CD8-positive, alpha-beta T cell (primary cell): ENCODE measurements at regions of chr10 and their contacts with region 1.

Region 1: DNA sequence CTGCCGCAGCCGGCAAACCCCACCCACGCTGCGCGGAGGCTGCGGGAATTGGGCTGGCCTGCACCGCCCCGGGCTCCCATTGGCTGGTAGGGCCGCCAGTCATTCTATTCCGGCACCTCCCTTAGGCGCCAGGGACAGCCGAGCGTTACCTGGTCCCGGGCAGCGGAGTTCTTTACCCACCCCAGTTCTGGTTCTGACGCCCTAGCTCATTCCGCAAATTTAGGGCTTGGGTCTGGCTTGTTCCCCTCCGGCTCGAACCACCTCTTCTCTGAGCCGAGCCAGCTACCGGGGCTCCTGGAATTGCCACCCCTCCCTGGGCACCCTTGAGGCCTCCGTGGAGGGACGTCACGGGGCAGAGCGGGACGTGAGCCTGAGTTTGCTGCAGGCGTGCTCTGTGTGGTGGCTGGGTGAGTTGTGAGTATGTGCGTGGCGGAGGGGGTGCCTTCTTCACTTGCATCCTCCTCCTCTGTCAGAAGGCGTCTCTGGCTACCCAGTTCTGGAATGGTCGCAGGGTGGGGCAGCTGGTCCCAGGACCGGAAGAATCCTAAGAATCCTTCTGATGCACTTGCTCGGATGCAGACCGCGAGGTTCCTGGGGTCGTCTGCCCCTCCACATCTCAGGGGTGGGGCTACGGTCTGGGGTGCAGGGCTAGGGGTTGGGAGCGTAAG is at the starts of genes PDZD7 and SFXN3:
- DNase-seq: peak; percentile 91 to 98 (median 96)
- ATAC-seq: peak; percentile 76
- H3K4me3 ChIP-seq: peak within 1 kb of the TSS; percentile 86 to 91
- H3K4me3 Mint-ChIP-seq: peak within 1 kb of the TSS; percentile 91
- H3K27ac ChIP-seq: peak within 1 kb of the TSS; percentile 87 to 98
- H3K27ac Mint-ChIP-seq: peak within 1 kb of the TSS; percentile 91
- H3K4me1 ChIP-seq: peaks cover 14% of the 10 kb centered on the region
- H3K4me1 Mint-ChIP-seq: peaks cover 23% of the 10 kb centered on the region
- H3K27me3 ChIP-seq: no peaks in the 10 kb centered on the region
- H3K27me3 Mint-ChIP-seq: no peaks in the 10 kb centered on the region
- CTCF ChIP-seq: no peak
- total RNA-seq, gene PDZD7: 0.95 to 1.7 TPM
- total RNA-seq, gene SFXN3: 38.1 to 39.3 TPM

Region 2: DNA sequence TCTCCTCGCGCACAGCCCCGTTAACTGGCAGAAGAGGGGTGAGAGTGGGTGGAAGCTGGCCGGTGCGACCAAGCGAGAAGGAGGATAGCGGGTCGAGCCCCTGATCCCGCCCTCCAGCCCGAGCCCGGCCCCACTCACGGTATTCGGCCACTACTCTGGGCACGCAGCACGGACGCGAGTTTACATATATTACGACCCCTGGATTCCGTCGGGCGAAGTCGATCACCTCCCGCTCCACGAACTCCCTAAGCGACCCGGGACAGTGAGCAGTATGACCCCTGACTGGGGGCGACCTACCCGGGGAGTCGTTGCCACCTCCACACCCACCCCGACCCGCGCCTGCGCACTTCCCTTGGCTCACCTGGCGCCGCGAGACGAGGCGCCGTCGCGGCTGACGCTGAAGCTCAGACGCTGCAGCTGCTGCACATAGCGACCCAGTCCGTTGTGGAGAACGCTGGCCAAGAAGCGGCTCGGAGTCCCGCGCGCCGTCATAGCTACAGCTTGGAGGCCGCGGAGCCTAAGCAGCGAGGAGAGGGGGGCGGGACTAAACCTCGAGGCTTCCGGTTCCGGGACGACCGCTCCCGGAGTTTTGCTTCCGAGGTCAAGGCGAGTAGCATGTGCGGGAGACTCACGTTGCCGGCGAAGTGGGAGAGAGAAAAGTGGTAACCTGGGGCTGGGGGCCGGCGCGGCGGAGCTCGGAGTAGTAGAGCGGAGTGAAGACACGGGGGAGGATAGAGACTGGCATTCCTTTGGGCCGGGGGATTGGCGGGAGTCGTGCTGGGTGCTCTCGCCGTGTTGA is 44.1 kb before region 1 on chr10 and contains the starts of genes MRPL43 and TWNK:
- CTCF ChIA-PET with region 1: no interaction called
- POLR2A ChIA-PET with region 1: interaction called, 3 read pairs
- intact Hi-C with region 1: loop called (anchors 1 to 2 kb)
- DNase-seq: peak; percentile 68 to 90 (median 87)
- ATAC-seq: peak; percentile 95
- H3K4me3 ChIP-seq: peak within 1 kb of the TSS; percentile 79 to 93
- H3K4me3 Mint-ChIP-seq: peak within 1 kb of the TSS; percentile 99
- H3K27ac ChIP-seq: peak within 1 kb of the TSS; percentile 51 to 64
- H3K27ac Mint-ChIP-seq: peak within 1 kb of the TSS; percentile 95
- H3K4me1 ChIP-seq: peaks cover 35% of the 10 kb centered on the region
- H3K4me1 Mint-ChIP-seq: peaks cover 46% of the 10 kb centered on the region
- H3K27me3 ChIP-seq: no peaks in the 10 kb centered on the region
- H3K27me3 Mint-ChIP-seq: no peaks in the 10 kb centered on the region
- CTCF ChIP-seq: no peak
- total RNA-seq, gene MRPL43: 28.3 to 28.4 TPM
- total RNA-seq, gene TWNK: 4.6 to 4.7 TPM

Region 3: DNA sequence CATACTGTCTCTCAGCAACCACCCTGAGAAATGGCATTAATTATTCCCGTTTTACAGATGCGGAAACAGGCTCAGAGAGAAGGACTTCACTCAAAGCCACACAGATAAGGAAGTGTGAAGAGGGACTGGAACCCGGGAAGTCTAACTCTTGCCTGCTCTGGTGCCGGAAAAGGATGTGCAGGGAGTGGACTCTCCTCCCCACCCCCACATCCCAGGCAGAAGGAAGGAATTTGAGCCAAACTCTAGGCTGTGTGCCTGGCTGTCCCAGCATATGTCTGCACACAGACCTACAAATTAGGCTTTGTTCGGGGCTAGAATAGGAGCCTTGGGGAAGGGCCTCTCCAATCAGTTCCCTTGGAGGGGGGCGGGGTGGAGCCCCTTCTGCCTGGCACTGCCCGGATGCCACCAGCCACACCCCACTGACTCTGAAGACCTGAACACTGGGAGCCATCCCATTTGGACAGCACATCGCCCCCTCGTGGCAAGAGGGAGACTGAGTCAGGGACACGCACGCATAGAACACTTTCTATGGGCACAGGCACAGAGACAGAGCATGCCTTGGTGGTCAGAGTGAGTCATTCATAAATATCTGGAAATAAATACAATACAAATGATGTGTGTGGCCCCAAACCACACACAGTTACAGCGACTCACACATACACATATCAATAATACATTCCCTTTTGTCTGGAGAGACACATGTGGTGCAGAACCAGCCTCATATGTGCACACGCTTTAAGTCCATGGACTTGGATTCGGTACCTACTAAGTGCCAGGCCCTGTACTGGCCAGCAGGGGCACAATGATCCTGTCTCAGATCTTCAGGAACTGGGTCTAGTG is 18.5 kb before region 1 on chr10:
- CTCF ChIA-PET with region 1: interaction called, 21 read pairs
- POLR2A ChIA-PET with region 1: interaction called, 3 read pairs
- intact Hi-C with region 1: loop called (anchors 1 to 2 kb)
- DNase-seq: peak; percentile 41 to 85 (median 78)
- ATAC-seq: peak; percentile 86
- H3K4me3 ChIP-seq: no peak overlapping the region
- H3K4me3 Mint-ChIP-seq: no peak overlapping the region
- H3K27ac ChIP-seq: no peak overlapping the region
- H3K27ac Mint-ChIP-seq: no peak overlapping the region
- H3K4me1 ChIP-seq: peaks cover 6% of the 10 kb centered on the region
- H3K4me1 Mint-ChIP-seq: peaks cover 13% of the 10 kb centered on the region
- H3K27me3 ChIP-seq: peaks cover 13 to 16% of the 10 kb centered on the region in 2 experiments
- H3K27me3 Mint-ChIP-seq: peaks cover 33% of the 10 kb centered on the region
- CTCF ChIP-seq: peak; percentile 83

Region 4: DNA sequence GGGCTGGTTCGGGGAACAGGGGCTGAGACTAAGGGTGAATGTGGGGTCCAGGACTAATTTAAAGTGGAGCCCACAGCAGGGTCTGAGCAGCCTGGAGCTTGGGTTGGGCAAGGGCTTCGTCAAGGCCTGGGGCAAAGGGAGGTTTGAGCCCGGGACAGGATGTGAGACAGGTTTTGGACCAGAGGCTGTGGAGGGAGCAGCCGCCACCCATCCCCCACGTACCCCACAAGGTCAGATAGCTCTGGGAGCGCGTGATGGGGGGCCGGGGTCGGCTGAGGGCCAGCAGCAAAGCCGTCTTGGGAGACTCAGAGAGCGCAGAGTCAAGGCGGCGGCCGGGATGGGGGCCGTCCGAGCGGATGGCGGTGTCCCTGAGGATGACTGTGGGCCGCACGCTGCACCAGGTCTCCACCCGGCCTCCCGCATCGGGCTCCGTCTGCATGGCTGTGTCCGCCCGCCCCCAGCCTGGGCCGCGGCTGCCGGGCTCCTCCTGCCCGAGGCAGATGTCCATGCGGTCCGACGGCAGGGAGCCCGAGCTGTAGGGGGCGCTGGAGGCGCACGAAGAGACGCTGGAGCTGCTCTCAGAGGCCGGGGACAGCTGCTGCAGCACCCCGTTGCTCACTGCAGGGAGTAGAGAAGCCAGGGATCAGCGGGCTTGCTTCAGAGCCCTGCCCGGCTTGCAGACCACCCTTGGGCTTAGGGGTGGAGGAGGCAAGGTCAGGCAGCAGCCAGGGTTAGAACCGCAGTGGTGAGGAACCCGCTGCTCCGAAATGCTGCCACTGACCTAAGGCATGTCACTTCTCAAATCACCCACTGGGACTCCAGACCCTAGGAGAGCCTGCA is 12.4 kb before region 1 on chr10:
- CTCF ChIA-PET with region 1: interaction called, 21 read pairs
- POLR2A ChIA-PET with region 1: interaction called, 3 read pairs
- intact Hi-C with region 1: no loop called
- DNase-seq: peak; percentile 51 to 79 (median 73)
- ATAC-seq: peak; percentile 78
- H3K4me3 ChIP-seq: no peak overlapping the region
- H3K4me3 Mint-ChIP-seq: no peak overlapping the region
- H3K27ac ChIP-seq: no peak overlapping the region
- H3K27ac Mint-ChIP-seq: no peak overlapping the region
- H3K4me1 ChIP-seq: no peaks in the 10 kb centered on the region
- H3K4me1 Mint-ChIP-seq: peaks cover 4% of the 10 kb centered on the region
- H3K27me3 ChIP-seq: peaks cover 16 to 22% of the 10 kb centered on the region in 2 experiments
- H3K27me3 Mint-ChIP-seq: peaks cover 51% of the 10 kb centered on the region
- CTCF ChIP-seq: peak; percentile 58

Region 5: GRCh38 chr10:101042667-101043355 is 11.5 kb after region 1 on chr10:
- CTCF ChIA-PET with region 1: interaction called, 23 read pairs
- POLR2A ChIA-PET with region 1: interaction called, 34 read pairs
- intact Hi-C with region 1: loop called in 1 of 2 experiments (anchors 1 kb)
- DNase-seq: peak; percentile 50 to 90 (median 80)
- ATAC-seq: peak; percentile 72
- H3K4me3 ChIP-seq: peak overlapping the region; percentile 66 to 71
- H3K4me3 Mint-ChIP-seq: peak overlapping the region; percentile 97
- H3K27ac ChIP-seq: peak overlapping the region; percentile 50 to 76
- H3K27ac Mint-ChIP-seq: peak overlapping the region; percentile 93
- H3K4me1 ChIP-seq: peaks cover 13% of the 10 kb centered on the region
- H3K4me1 Mint-ChIP-seq: peaks cover 20% of the 10 kb centered on the region
- H3K27me3 ChIP-seq: peaks cover 0 to 6% of the 10 kb centered on the region in 2 experiments
- H3K27me3 Mint-ChIP-seq: peaks cover 12% of the 10 kb centered on the region
- CTCF ChIP-seq: no peak

Region 6: DNA sequence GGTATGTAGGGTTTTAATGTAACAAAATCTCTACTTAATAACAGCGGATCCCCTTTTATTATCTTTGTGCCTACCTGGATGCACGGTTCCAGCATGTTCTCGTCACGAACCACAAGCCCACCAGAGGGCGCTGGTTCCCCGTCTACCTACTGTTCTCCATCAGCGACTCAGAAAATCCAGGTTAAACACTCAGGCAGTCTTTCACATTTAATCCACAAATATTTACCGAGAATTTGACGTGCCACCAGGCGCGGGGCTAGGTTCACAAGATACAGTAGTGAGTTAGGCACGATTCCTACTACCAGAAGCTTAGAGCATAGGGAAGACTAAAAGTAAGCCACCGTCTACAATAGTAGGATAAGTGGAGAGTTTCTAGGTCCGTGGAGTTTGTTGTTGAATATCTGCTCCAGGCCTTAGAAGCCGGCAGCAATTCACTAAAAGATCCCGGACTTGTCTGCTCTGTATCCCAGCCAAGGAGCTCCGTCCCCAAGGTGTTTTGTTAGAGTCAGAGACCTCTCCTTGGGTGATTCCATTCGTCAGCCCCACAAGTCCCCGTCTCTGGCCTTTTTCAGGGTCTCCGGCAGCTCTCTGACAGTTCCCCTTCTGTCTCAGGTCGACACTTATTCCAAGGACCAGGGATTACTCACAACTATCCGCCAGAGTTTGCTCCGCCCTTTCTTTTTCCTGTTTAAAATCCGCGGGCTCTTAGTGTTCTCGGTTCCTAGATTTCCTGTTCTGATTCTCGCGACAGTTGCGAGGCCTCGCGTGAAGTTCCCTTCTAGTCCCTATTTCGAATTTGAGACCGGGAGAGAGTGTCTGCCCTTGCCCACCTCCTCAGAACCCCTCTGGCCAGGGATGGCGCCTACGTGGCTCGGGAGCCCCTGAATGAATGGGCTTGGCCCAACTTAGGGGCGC is 29.0 kb after region 1 on chr10:
- CTCF ChIA-PET with region 1: interaction called, 580 read pairs
- POLR2A ChIA-PET with region 1: interaction called, 7 read pairs
- intact Hi-C with region 1: loop called (anchors 1 to 5 kb)
- DNase-seq: peak; percentile 80 to 96 (median 91)
- ATAC-seq: peak; percentile 67
- H3K4me3 ChIP-seq: peak overlapping the region; percentile 85 to 94
- H3K4me3 Mint-ChIP-seq: peak overlapping the region; percentile 98
- H3K27ac ChIP-seq: peak overlapping the region; percentile 55 to 92
- H3K27ac Mint-ChIP-seq: peak overlapping the region; percentile 91
- H3K4me1 ChIP-seq: peaks cover 27% of the 10 kb centered on the region
- H3K4me1 Mint-ChIP-seq: peaks cover 27% of the 10 kb centered on the region
- H3K27me3 ChIP-seq: peaks cover 20 to 27% of the 10 kb centered on the region in 2 experiments
- H3K27me3 Mint-ChIP-seq: peaks cover 18% of the 10 kb centered on the region
- CTCF ChIP-seq: peak; percentile 95

Region 7: DNA sequence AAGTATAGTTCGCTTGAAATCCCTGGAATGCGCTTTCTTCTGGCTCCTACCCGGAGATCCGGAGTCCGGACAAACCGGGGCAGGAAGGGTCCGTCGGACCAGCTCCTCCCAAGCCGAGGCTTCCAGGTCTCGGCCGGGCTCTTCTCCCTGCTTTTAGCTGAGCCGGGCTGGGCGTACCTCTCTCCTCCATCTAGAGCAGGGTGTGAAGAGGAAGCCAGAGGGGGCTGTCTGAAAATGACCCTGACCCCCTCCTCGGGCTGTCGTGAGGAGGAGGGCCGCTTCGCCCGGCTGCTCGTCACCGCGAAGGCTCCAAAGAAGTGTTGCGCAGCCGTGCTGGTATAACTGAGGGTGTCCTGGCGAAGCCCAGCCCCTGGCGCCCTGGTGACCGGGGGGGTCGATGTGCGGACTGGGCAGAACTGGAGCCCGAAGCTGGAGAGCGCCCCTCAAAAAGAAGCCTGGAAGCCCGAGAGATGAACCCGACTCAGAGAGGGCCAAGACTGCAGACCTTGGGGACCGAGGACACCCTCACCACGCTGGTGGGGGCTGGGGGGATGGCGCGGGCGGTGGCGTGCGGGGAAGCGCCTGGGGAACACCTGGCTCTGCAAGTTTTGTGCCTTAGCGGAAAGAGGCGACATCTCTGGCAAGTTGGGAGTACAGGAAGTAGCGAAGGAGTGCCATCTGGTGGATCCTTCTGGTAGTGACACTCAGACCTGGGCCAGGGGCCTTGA is 36.3 kb after region 1 on chr10:
- CTCF ChIA-PET with region 1: interaction called, 580 read pairs
- POLR2A ChIA-PET with region 1: interaction called, 4 read pairs
- intact Hi-C with region 1: loop called in 1 of 2 experiments (anchors 5 kb)
- DNase-seq: peak; percentile 49 to 86 (median 77)
- ATAC-seq: peak; percentile 82
- H3K4me3 ChIP-seq: peak overlapping the region; percentile 59 to 64
- H3K4me3 Mint-ChIP-seq: peak overlapping the region; percentile 91
- H3K27ac ChIP-seq: no peak overlapping the region
- H3K27ac Mint-ChIP-seq: no peak overlapping the region
- H3K4me1 ChIP-seq: peaks cover 29% of the 10 kb centered on the region
- H3K4me1 Mint-ChIP-seq: peaks cover 18% of the 10 kb centered on the region
- H3K27me3 ChIP-seq: peaks cover 35 to 39% of the 10 kb centered on the region in 2 experiments
- H3K27me3 Mint-ChIP-seq: peaks cover 41% of the 10 kb centered on the region
- CTCF ChIP-seq: peak; percentile 88